Activated CD8-positive, alpha-beta T cell treated with anti-CD3 and anti-CD28 coated beads for 36 hours (primary cell): ENCODE measurements at regions of chr14 and their contacts with region 1.

Region 1: DNA sequence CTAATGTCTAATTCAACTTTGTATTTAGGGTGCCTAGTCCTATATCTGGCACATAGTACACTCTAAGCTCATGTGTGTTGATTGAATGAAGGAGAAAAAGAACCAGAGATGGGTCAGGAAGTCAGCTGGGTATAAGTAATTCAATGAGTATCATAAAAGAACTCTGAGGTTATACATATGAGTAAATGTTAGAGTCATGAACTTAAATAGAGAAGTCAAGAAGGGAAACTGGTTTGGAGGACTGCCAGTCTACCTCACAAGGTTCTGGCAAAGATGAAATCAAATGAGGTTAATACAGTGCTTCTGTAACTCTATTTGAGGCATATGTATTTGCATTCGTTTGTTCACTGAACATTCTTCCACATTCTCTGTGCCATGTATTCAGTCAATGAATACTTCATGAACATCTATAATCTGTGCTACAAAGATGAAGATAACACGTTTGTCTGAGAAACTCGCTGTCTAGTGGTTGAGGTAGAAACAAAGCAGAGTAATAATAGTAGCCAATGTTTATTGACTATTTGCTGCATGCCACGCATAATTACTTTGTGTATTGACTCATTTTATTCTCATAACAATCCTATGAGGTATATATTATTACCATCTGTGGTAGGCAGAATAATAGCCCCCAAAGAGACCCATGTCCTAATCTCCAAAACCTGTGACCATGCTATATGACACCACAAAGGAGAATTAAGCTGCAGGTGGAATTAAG is 88.9 kb downstream of the PTGER2 start:
- DNase-seq: peak; percentile 74
- ATAC-seq: peak; percentile 87
- H3K4me3 Mint-ChIP-seq: no peak overlapping the region
- H3K27ac Mint-ChIP-seq: peak overlapping the region; percentile 32
- H3K4me1 Mint-ChIP-seq: peaks cover 54% of the 10 kb centered on the region
- H3K27me3 Mint-ChIP-seq: peaks cover 5% of the 10 kb centered on the region
- CTCF ChIP-seq: no peak

Region 2: GRCh38 chr14:52299692-52300278 is 103.2 kb before region 1 on chr14:
- CTCF ChIA-PET with region 1: interaction called, 26 read pairs
- POLR2A ChIA-PET with region 1: no interaction called
- intact Hi-C with region 1: no loop called
- DNase-seq: no peak
- ATAC-seq: peak; percentile 75
- H3K4me3 Mint-ChIP-seq: no peak overlapping the region
- H3K27ac Mint-ChIP-seq: no peak overlapping the region
- H3K4me1 Mint-ChIP-seq: peaks cover 16% of the 10 kb centered on the region
- H3K27me3 Mint-ChIP-seq: no peaks in the 10 kb centered on the region
- CTCF ChIP-seq: peak; percentile 83

Region 3: DNA sequence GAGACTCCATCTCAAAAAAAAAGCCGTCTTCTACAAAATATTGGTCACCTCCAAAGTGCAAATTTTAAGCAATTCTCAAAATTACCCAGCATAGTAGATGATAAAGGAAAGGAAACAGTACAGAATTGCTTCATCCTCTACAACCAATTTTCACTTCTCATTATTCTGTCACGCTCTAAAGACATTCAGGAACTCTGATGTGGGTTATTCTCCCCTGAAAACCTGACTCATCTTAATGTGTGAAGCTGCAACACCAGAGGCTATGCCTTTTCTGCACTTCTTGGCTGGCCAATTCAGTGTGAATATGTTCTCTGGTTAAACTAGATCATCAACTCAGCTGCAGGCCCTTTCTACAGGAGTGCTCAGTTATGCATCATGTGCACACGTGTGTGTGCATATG is 77.8 kb before region 1 on chr14:
- CTCF ChIA-PET with region 1: interaction called, 3 read pairs
- POLR2A ChIA-PET with region 1: interaction called, 4 read pairs
- intact Hi-C with region 1: loop called (anchors 5 kb)
- DNase-seq: peak; percentile 62
- ATAC-seq: peak; percentile 89
- H3K4me3 Mint-ChIP-seq: peak overlapping the region; percentile 13
- H3K27ac Mint-ChIP-seq: peak overlapping the region; percentile 74
- H3K4me1 Mint-ChIP-seq: peaks cover 62% of the 10 kb centered on the region
- H3K27me3 Mint-ChIP-seq: no peaks in the 10 kb centered on the region
- CTCF ChIP-seq: no peak

Region 4: GRCh38 chr14:52351233-52352060 is 51.5 kb before region 1 on chr14:
- CTCF ChIA-PET with region 1: interaction called, 4 read pairs
- POLR2A ChIA-PET with region 1: interaction called, 4 read pairs
- intact Hi-C with region 1: loop called (anchors 5 kb)
- DNase-seq: peak; percentile 47
- ATAC-seq: peak; percentile 75
- H3K4me3 Mint-ChIP-seq: peak overlapping the region; percentile 59
- H3K27ac Mint-ChIP-seq: peak overlapping the region; percentile 96
- H3K4me1 Mint-ChIP-seq: peaks cover 68% of the 10 kb centered on the region
- H3K27me3 Mint-ChIP-seq: peaks cover 1% of the 10 kb centered on the region
- CTCF ChIP-seq: no peak

Region 5: DNA sequence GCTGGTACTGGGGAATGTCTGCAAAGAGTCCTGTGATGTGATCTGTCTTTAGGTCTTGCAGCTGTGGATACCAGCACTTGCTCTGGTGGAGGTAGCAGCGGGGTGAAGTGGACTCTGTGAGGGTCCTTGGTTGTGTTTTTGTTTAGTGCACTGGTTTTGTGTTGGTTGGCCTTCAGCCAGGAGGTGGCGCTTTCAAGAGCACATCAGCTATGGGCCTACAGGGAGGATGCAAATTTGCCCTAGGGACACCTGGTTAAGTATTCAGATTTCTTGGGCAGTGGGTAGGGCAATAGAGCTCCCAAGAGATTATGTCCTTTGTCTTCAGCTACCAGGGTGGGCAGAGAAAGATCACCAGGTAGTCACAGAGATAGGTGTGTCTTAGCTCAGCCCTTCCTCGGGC is 25.0 kb before region 1 on chr14:
- CTCF ChIA-PET with region 1: interaction called, 12 read pairs
- POLR2A ChIA-PET with region 1: interaction called, 3 read pairs
- intact Hi-C with region 1: no loop called
- DNase-seq: no peak
- ATAC-seq: no peak
- H3K4me3 Mint-ChIP-seq: no peak overlapping the region
- H3K27ac Mint-ChIP-seq: no peak overlapping the region
- H3K4me1 Mint-ChIP-seq: peaks cover 10% of the 10 kb centered on the region
- H3K27me3 Mint-ChIP-seq: no peaks in the 10 kb centered on the region
- CTCF ChIP-seq: peak; percentile 5

Region 6: DNA sequence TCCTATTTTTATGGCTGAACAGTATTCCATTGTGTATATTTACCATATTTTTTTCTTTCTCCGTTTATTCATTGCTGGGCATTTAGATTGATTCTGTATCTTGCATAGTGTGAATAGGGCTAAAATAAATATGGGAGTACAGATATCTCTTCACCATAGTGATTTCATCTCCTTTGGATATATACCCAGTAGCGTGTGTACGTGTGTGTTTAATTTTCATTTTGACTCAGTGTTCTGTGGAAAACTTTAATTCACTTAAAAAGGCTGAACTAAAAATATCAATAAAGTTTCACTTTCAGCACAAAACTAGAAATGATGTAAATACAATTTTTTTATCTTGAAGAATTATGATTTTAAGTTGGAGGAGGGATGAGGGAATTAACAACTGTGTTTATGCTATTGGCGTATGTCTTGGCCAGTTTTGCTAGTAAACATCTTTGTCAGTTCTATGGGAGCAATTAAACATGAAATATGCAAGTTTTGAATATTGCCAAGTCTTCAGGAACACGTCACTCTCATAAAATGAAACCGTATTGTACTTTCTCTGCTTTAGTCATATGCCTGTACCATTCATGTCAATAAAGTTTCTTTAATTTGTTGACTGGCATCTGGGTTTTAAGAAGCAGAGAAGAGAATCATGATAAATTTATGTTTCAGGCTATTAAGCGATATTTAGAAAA is 10.9 kb after region 1 on chr14:
- CTCF ChIA-PET with region 1: interaction called, 12 read pairs
- POLR2A ChIA-PET with region 1: interaction called, 7 read pairs
- intact Hi-C with region 1: no loop called
- DNase-seq: no peak
- ATAC-seq: peak; percentile 87
- H3K4me3 Mint-ChIP-seq: peak overlapping the region; percentile 58
- H3K27ac Mint-ChIP-seq: peak overlapping the region; percentile 91
- H3K4me1 Mint-ChIP-seq: peaks cover 60% of the 10 kb centered on the region
- H3K27me3 Mint-ChIP-seq: no peaks in the 10 kb centered on the region
- CTCF ChIP-seq: no peak